ENCODE measurements at regions of chr1 and their contacts with region 1.

Region 1: GRCh38 chr1:163071405-163072255 is 2.5 kb downstream of the RGS4 start:
- DNase-seq: no peak
- ATAC-seq: no peak; the same call in 1 of the 2 replicates
- H3K4me3 ChIP-seq: peak overlapping the region in 1 of 2 experiments; percentile 30; a peak in 1 of 4 replicates
- H3K27ac ChIP-seq: no peak overlapping the region
- H3K4me1 ChIP-seq: no peaks in the 10 kb centered on the region
- H3K27me3 ChIP-seq: peaks cover 12% of the 10 kb centered on the region
- CTCF ChIP-seq: peak; percentile 83

Region 2: GRCh38 chr1:162726555-162726954 is 345.1 kb before region 1 on chr1:
- CTCF ChIA-PET with region 1: no interaction called
- POLR2A ChIA-PET with region 1: no interaction called
- in situ Hi-C with region 1: no loop called
- intact Hi-C with region 1: no loop called
- DNase-seq: no peak
- ATAC-seq: 0 out of 2 replicates have a peak, but pooled peaks have one; percentile 38
- H3K4me3 ChIP-seq: no peak overlapping the region
- H3K27ac ChIP-seq: no peak overlapping the region
- H3K4me1 ChIP-seq: no peaks in the 10 kb centered on the region
- H3K27me3 ChIP-seq: no peaks in the 10 kb centered on the region
- CTCF ChIP-seq: no peak

Region 3: GRCh38 chr1:162835157-162835899 is 236.3 kb before region 1 on chr1:
- CTCF ChIA-PET with region 1: no interaction called
- POLR2A ChIA-PET with region 1: no interaction called
- in situ Hi-C with region 1: no loop called
- intact Hi-C with region 1: no loop called
- DNase-seq: no peak
- ATAC-seq: no peak
- H3K4me3 ChIP-seq: no peak overlapping the region
- H3K27ac ChIP-seq: no peak overlapping the region
- H3K4me1 ChIP-seq: no peaks in the 10 kb centered on the region
- H3K27me3 ChIP-seq: peaks cover 3% of the 10 kb centered on the region
- CTCF ChIP-seq: no peak

Region 4: GRCh38 chr1:162847839-162848453 is 223.7 kb before region 1 on chr1:
- CTCF ChIA-PET with region 1: no interaction called
- POLR2A ChIA-PET with region 1: interaction called, 3 read pairs
- in situ Hi-C with region 1: no loop called
- intact Hi-C with region 1: loop called (anchors 5 kb)
- DNase-seq: no peak
- ATAC-seq: peak; percentile 78
- H3K4me3 ChIP-seq: no peak overlapping the region
- H3K27ac ChIP-seq: no peak overlapping the region
- H3K4me1 ChIP-seq: no peaks in the 10 kb centered on the region; the same call in 1 of the 2 replicates
- H3K27me3 ChIP-seq: no peaks in the 10 kb centered on the region; the same call in 1 of the 2 replicates
- CTCF ChIP-seq: peak; percentile 88

Region 5: DNA sequence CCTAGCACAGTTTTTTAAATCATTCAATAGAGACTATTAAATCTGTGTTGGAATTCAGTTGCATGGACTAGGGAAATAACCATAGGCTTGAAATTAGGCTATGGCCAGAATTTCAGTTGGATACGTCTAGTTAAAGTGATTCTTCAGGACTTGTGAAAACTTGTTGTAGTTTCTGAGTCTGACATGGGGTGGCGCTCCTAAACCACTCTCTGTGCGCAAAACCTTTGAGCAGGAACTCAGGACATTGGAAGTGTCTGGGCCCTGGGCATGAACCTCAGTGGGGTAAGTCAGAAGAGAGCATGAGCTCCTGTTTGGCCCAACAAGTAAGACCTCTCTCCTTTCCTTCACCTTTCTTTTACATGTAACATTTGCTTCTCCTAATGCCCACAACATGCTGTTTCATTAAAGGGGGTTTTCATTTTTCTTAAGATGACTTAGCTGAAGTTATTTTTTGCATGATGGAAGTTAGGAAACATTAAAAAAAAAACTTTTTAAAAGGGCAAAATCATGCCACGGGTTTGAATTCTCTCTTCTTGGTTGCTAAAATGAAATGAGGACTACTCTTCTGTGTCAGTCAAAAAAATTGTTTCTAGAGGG is 193.5 kb before region 1 on chr1:
- CTCF ChIA-PET with region 1: interaction called, 3 read pairs
- POLR2A ChIA-PET with region 1: no interaction called
- in situ Hi-C with region 1: no loop called
- intact Hi-C with region 1: loop called (anchors 1 kb)
- DNase-seq: no peak
- ATAC-seq: peak; percentile 68; the same call in 1 of the 2 replicates
- H3K4me3 ChIP-seq: no peak overlapping the region
- H3K27ac ChIP-seq: no peak overlapping the region
- H3K4me1 ChIP-seq: no peaks in the 10 kb centered on the region
- H3K27me3 ChIP-seq: peaks cover 3% of the 10 kb centered on the region; the same call in 1 of the 2 replicates
- CTCF ChIP-seq: peak; percentile 76

Region 6: GRCh38 chr1:163174524-163175437 is 103.2 kb after region 1 on chr1:
- CTCF ChIA-PET with region 1: interaction called, 4 read pairs
- POLR2A ChIA-PET with region 1: no interaction called
- in situ Hi-C with region 1: no loop called
- intact Hi-C with region 1: loop called (anchors 2 kb)
- DNase-seq: no peak
- ATAC-seq: peak; percentile 87
- H3K4me3 ChIP-seq: peak overlapping the region in 1 of 2 experiments; percentile 27; a peak in 2 of 4 replicates
- H3K27ac ChIP-seq: no peak overlapping the region
- H3K4me1 ChIP-seq: 0 out of 2 replicates have a peak, but pooled peaks cover 3% of the 10 kb centered on the region
- H3K27me3 ChIP-seq: no peaks in the 10 kb centered on the region
- CTCF ChIP-seq: peak; percentile 93

Region 7: DNA sequence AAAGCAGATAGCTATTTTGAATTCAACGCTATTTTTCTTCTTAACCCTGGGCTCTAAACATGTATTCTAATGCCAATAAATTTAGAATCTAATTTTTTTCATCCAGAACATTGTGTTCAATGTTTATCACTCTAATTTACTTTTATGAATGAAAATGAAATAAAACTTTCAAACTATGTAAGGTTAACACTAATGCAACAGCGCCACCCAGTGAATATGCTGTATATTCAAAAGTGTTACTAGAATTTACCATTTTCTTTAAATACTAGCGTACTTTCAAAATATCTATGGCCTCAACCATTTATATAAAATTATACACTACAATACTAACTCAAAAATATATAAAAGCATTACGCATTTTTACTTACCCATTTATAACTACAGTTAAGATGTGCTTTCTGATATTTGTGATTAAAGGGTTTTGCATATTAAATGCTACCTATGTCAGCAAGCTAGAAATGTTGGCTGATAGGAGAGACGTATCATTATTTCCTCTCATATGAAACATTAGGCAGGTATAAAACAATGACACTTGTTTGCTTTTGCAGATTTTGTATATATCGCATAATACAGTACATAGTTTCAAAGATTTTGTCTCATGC is 244.2 kb after region 1 on chr1:
- CTCF ChIA-PET with region 1: no interaction called
- POLR2A ChIA-PET with region 1: no interaction called
- in situ Hi-C with region 1: no loop called
- intact Hi-C with region 1: loop called (anchors 2 kb)
- DNase-seq: no peak
- ATAC-seq: no peak
- H3K4me3 ChIP-seq: no peak overlapping the region
- H3K27ac ChIP-seq: no peak overlapping the region
- H3K4me1 ChIP-seq: peaks cover 3% of the 10 kb centered on the region
- H3K27me3 ChIP-seq: no peaks in the 10 kb centered on the region
- CTCF ChIP-seq: peak; percentile 48; the same call in 1 of the 2 replicates

Measured in Panc1 (cell line).